ENCODE measurements at regions of chr10 and their contacts with region 1.

Region 1: GRCh38 chr10:77873536-77874380 is 52.8 kb downstream of the DLG5 start:
- DNase-seq: no peak
- ATAC-seq: no peak

Region 2: DNA sequence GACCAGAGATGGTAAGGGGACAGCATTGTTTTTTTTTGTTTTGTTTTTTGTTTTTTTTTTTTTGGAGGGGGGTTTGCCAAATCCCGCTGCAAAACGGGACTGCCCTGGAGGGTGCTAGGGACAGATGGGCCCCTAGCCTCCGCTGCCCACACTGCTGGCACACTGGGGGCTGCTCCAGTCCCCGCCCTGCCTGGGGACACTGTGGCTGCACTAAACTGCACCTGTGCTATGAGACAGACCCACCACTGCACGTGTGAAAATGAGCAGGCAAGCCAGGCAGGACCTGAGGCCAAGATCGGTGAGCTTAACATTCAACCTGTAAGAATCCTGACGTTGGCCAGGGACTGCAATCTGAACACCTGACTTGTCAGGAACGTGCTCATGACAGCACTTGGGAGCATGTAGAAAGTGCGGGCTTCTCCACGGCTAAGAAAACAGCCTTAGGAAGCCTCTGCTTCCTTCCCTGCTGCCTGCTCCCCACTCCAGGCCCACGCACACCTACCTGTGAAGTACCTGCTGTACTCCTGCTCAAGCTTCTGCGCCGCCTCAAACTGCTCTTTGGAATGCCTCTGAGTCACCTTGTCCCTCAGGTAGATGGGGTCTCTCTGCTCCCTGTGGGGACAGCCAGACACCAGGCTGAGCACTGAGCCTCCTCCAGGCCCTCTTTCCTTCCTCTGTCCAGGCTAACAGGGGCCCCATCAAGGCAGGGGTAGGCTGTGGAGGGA is 80.1 kb before region 1 on chr10:
- intact Hi-C with region 1: no loop called
- DNase-seq: no peak
- ATAC-seq: no peak

Region 3: DNA sequence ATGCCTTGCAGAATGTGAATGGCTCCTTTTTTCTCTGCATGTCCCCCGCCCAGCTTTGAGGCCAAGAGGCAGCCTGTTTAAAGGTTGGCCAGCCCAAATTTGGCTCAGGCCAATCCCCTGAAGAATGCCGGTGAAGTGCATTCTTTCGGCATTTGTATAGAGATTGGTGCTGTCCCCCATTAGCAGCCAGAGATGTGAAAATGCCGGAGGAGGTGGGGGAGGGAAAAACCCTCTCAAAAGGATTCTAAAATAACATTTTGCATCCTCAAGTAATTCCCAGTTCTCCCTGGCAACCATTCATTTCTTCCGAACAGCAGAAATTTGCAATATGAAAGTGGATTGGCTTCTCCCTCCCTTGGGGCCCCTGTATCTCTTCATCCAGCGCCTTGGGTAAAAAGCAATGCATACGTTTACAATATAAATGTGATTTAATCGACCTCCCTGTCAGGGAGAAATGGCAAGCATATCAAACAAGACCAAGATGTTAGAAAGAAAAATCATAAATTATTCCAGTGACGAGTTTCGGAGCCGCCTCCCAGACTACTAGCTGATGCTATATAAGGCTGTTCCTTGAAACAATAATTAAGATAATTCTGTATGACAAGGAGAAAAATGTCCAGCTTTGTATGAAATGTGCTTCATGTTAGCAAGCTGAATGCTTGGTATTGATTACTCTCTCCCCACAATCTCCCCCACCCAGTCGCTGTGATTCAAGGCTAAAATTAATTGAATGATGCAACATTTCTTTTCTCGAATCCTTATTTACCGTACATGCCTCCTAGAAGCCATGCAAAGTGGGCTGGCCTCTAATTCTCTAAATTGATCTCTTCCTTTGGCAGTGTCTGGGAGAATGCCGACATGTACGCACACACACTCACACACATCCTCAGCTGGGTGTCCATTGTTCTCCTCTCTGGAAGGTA is 483.6 kb after region 1 on chr10:
- intact Hi-C with region 1: loop called (anchors 10 kb)
- DNase-seq: no peak
- ATAC-seq: no peak

Region 4: DNA sequence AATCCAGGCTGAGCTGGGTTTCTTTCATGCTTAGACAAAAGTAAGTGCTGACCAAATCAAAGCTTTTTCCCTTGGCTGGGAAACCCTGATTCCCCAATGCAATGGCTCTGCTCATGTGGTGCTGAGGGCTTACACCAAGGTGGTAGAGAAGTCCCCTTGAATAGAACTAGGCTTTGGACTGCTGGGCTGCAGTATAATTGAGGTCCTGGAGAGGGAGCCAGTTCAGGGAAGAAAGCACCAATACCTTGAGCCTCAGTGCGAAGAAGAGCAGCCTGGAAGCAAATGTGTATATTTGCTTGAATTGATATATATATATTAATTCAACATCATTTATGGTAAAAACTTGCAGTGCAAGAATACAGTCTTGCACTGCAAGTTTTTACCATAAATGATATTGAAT is 551.0 kb after region 1 on chr10:
- intact Hi-C with region 1: no loop called
- DNase-seq: no peak
- ATAC-seq: no peak